ENCODE measurements at regions of chr12 and their contacts with region 1.

Region 1: GRCh38 chr12:45728630-45729232 is 775 bp upstream of the ARID2 start:
- DNase-seq: peak; percentile 91 to 99 (median 96)

Region 2: GRCh38 chr12:45215419-45216229 is 513.1 kb before region 1 on chr12 and contains the start of gene ANO6:
- intact Hi-C with region 1: loop called (anchors 5 kb)
- DNase-seq: peak; percentile 55 to 95 (median 86)

Region 3: GRCh38 chr12:45543906-45544315 is 184.8 kb before region 1 on chr12:
- intact Hi-C with region 1: loop called (anchors 5 kb)
- DNase-seq: peak in 33 of 42 donors; percentile 5 to 82 (median 58)

Region 4: GRCh38 chr12:45615268-45615667 is 113.5 kb before region 1 on chr12:
- intact Hi-C with region 1: loop called (anchors 10 kb)
- DNase-seq: no peak

Region 5: DNA sequence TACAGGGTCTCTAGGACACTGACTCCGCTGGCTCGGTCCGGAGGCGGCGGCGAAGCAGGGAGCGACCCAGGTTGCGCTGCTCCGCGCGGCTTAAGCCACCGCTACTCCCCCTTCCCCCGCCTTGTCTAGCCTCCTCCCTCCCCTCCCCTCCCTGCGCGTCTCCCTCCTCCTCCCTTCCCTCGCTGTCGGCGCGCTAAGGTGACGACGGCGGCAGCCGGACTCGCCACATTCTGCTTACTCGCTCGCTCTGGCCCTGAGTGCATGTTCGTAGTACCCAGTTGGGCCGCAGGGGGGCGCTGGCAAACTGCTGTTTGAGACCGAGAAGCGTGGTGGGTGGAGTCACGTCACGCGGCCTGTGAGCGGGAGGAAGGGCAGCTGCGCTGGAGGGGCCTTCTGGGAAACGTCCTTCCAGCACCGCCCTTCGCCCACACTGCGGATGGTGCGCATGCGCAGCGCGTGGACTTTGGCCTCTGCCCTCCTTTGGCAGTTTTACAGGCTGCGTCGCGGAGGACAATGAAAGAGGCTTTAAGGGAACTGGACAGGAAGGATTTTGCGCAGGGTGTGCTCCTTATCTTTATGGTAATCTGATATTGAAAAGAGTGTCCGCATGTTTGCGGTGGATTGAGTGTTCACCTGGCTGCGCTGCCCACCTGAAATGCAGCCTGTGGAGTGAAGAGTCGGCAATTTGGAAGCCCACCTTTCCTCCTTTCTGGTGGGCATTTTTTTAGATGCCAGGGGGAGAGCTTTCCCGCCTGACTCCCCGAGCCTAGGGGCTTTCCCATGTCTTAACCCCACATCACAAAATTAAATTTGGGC is 261.9 kb after region 1 on chr12 and contains the start of gene SCAF11:
- intact Hi-C with region 1: loop called (anchors 2 kb)
- DNase-seq: peak; percentile 98 to 100 (median 100)

Region 6: GRCh38 chr12:46071769-46072624 is 343.3 kb after region 1 on chr12:
- intact Hi-C with region 1: no loop called
- DNase-seq: peak; percentile 4 to 81 (median 60)

Measured in head of caudate nucleus (tissue), 42 donors.